PC-9 (cell line): ENCODE measurements at regions of chr18 and their contacts with region 1.

Region 1: GRCh38 chr18:26863921-26864497 is 1.5 kb downstream of the AQP4 start:
- DNase-seq: no peak
- H3K4me3 ChIP-seq: no peak overlapping the region
- H3K27ac ChIP-seq: no peak overlapping the region
- H3K4me1 ChIP-seq: no peaks in the 10 kb centered on the region
- H3K27me3 ChIP-seq: no peaks in the 10 kb centered on the region
- CTCF ChIP-seq: no peak

Region 2: DNA sequence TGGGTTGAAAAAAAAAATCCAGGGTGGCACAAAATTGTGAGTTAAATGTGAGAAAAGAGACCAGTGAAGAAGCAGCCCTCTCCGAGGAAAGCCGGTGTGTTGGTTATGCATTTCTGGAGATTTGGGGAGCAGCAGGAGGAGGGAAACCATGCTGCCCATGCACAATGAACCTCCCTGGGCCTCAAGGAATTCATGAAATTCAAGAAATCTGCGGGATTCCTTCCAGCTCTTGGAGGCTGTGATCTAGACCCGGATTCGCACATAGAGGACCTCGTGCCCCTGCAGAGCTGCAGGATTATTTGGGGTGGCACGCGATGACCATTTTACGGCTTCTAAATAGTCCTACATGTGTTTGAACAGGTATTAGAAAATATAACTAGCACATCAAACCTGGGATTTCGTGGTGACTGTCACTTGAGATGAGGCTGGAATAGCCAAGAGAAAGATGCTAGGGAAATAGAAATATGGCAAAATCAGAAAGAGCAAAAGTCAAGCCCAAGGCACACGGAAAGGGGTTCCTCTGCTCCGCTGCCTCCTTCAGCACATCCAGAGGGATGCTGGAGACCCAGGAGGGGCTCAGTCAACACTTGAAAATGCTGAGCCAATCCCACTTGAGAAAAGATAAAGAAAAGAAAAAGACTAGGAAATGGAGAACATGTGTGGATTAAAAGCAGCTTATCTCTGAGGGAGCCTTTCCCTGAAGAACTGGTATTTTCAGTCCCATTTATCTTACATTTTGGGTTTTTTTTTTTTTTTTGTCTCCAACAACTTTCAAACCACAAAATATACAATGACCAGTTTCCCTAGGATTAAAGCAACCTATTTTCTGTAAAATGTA is 337.7 kb before region 1 on chr18:
- CTCF ChIA-PET with region 1: no interaction called
- POLR2A ChIA-PET with region 1: interaction called, 11 read pairs
- intact Hi-C with region 1: no loop called
- DNase-seq: peak in 1 of 2 experiments; percentile 75
- H3K4me3 ChIP-seq: no peak overlapping the region
- H3K27ac ChIP-seq: 0 out of 2 replicates have a peak overlapping the region, but pooled peaks have one; percentile 37
- H3K4me1 ChIP-seq: peaks cover 22% of the 10 kb centered on the region
- H3K27me3 ChIP-seq: no peaks in the 10 kb centered on the region
- CTCF ChIP-seq: no peak

Region 3: DNA sequence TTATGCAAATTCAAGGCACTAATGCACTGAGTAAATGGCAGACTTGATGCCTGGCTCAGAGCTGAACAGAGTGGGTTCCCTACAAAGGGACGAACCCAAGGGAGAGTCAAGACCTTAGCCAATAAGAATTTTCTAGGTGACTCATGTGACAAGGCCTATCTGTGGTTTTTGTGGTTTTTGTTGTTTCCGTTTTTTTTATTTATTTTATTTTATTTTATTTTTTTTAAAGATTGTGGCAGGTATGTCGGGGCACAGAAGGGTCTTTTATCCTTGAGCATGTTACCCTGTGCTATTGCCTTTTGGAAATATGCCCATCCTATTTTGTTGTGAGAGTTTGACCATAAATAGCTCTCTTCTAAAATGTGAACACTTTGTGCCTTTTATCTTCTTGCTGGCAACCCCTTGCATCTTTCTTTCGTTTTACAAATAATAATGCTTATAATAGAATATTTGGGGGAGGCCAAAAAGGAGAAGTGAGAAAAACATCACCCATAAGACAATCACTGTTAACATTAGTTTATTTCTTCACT is 114.9 kb after region 1 on chr18:
- CTCF ChIA-PET with region 1: no interaction called
- POLR2A ChIA-PET with region 1: no interaction called
- intact Hi-C with region 1: no loop called
- DNase-seq: no peak
- H3K4me3 ChIP-seq: no peak overlapping the region
- H3K27ac ChIP-seq: no peak overlapping the region
- H3K4me1 ChIP-seq: no peaks in the 10 kb centered on the region
- H3K27me3 ChIP-seq: no peaks in the 10 kb centered on the region
- CTCF ChIP-seq: no peak